Posterior vena cava (tissue), 2 donors: ENCODE measurements at regions of chr1 and their contacts with region 1.

Region 1: DNA sequence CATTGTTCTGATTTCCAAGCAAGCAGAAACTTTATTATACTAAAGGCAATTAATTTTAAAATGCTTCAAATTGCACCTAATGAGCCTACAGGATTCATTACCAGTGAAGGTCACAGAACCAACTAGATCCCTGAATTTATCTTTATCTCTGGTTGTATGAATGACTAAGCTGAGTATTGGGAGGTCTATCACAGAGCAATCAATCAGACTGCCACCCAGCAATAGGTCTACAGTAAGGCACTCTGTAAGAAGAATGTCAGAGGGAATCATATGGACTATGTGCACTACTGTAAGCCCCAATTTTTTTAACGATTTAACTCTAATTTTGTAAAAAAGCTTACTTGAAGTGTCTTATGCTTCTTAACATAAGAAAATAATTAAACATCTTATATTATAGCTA is 707.0 kb downstream of the AMY1C start:
- DNase-seq: no peak

Region 2: DNA sequence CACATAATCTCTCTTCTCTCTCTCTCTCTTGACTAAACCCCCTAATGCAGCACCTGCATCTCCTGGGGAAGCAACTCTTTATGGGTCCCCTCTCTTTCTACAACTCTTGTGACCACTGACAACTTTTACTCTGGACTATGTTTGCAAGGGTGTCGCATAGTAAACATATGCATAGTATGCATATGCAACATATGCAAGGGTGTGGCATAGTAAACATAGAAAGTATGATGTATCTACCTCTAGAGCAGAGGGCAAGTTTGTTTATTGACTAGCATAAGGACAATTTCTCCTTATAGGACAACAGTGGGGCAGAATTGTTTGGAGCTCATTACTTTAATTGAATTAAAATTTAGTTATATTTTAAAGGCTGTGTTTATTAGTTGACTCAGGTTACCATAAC is 244.5 kb before region 1 on chr1:
- intact Hi-C with region 1: no loop called
- DNase-seq: no peak

Region 3: DNA sequence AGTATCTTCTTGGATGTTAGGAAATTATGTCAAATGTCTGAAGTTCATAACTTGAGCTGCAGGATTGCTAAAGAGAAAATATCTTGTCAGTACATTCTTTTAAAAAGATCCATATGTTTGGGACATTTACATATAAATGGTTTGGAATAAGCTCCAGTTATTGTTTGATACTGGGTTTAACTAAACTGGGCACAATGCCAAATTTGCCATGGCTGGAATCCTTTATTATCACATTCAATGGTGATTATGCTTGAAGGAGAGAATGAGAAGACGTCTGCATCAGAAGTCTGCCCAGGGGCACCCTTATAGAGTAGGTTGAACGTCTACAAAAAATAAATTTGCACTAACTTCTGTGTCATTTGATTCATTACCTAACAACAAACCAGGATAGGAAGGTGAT is 54.5 kb before region 1 on chr1:
- intact Hi-C with region 1: loop called in 1 of 2 experiments (anchors 2 kb)
- DNase-seq: no peak

Region 4: DNA sequence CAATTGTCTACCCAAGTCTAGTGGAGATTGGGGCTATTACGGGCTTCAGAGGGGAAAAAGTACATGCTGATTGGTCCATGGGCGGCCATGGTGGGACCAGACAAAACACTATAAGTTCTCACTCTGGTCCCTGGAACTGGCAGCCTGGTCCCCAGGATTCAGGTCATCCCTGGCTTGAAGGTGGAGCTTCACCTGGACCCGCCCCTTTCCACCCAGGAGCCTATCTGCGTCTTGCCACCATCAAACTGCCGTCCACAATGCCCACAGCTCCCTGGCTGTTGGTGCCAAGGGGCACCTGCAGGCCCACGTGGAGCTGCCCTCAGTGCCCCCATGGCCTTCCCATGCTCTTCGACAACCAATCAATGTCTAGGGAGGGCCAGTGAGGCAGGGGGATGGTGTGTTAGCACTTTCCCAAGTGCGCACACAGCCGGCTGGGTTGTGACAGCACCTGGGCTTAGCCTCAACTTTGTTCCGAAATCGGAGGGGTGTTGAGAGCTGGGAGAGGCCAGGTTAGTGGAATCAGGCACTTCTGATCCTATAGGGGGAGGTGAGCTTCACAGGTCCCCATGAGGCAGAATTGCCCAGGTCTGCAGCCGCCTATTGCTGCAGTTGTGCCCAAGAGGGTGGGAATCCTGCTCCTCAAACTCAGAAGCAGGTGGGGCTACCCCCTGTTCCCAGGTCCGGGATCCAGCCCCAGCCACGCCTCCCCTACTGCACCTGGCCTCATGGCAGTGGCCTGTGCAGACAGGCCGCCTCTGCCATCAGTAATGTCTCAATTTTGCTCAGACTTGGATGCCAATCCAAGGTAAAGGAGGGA is 1230.4 kb after region 1 on chr1:
- intact Hi-C with region 1: no loop called
- DNase-seq: no peak